CD8-positive, alpha-beta T cell (primary cell): ENCODE measurements at regions of chr4 and their contacts with region 1.

Region 1: GRCh38 chr4:88033309-88033708 is 25.9 kb downstream of the PKD2 start:
- DNase-seq: peak in 4 of 9 experiments; percentile 19 to 71 (median 44)
- ATAC-seq: no peak
- H3K4me3 ChIP-seq: no peak overlapping the region
- H3K4me3 Mint-ChIP-seq: no peak overlapping the region
- H3K27ac ChIP-seq: no peak overlapping the region
- H3K27ac Mint-ChIP-seq: no peak overlapping the region
- H3K4me1 ChIP-seq: no peaks in the 10 kb centered on the region
- H3K4me1 Mint-ChIP-seq: no peaks in the 10 kb centered on the region
- H3K27me3 ChIP-seq: no peaks in the 10 kb centered on the region
- H3K27me3 Mint-ChIP-seq: no peaks in the 10 kb centered on the region
- CTCF ChIP-seq: peak; percentile 49

Region 2: DNA sequence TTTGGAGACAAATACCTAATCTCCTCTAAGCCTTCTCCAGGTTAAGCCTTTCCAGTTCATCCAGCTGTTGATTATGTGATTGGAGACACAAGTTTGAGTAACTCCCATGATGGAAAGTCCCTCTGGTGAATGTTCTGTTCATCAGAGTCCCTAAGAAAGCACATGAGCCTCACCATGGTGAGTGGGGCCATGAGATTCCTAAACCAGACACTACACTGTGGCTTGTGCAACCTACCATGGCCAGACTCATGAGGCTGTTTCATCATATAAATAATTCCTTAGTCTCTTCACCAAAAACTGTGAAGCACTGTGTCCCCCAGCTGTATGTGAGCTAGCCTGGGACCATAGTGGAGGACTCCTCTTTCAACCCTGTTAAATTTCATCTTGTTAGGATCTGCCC is 11.5 kb before region 1 on chr4:
- CTCF ChIA-PET with region 1: interaction called, 16 read pairs
- POLR2A ChIA-PET with region 1: no interaction called
- intact Hi-C with region 1: no loop called
- DNase-seq: no peak
- ATAC-seq: no peak
- H3K4me3 ChIP-seq: no peak overlapping the region
- H3K4me3 Mint-ChIP-seq: no peak overlapping the region
- H3K27ac ChIP-seq: no peak overlapping the region
- H3K27ac Mint-ChIP-seq: no peak overlapping the region
- H3K4me1 ChIP-seq: no peaks in the 10 kb centered on the region
- H3K4me1 Mint-ChIP-seq: no peaks in the 10 kb centered on the region
- H3K27me3 ChIP-seq: no peaks in the 10 kb centered on the region
- H3K27me3 Mint-ChIP-seq: no peaks in the 10 kb centered on the region
- CTCF ChIP-seq: no peak